ENCODE measurements at regions of chr6 and their contacts with region 1.

Region 1: DNA sequence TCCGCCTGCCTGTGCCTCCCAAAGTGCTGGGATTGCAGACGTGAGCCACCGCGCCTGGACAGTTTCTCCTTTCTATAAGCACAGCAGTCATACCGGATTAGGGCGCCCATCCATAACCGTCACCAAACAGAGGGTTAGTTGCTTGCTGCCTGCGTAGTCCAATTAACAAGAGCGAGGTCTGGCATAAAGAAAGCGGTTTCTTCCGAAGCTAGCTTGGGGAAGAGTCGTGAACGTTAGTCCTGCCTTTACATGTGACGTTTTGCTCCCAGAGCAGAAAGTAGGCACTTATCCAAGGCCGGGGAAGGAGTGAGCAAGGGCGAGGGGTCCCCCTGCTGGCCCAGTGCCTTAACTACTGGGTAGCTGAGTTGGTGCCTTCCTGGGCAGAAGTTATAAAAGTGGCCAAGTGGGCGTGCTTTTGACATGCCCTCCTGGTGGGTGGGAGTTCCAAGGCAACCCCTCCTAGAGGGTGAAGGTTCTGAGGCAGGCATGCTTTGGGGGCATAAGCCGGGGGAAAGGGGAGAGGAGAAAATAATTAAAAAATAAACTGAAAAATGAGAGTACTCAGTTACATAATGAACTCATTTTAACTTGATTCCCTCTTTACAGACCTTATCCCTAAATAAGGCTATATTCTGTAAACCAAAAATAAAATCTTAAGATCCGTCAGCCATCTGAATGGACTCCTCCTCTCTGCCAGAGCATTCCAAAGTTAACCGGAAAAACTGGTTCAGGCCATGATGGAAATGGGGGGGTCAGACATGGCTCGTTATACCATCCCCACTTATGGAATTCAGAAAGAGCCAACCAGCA is 88.0 kb downstream of the FAM217A start:
- DNase-seq: peak; percentile 52
- ATAC-seq: peak; percentile 95
- H3K4me3 ChIP-seq: peak overlapping the region; percentile 20 to 48; a peak in 3 of 4 replicates
- H3K27ac ChIP-seq: peak overlapping the region; percentile 49
- H3K4me1 ChIP-seq: no peaks in the 10 kb centered on the region
- H3K27me3 ChIP-seq: no peaks in the 10 kb centered on the region
- CTCF ChIP-seq: peak; percentile 95

Region 2: DNA sequence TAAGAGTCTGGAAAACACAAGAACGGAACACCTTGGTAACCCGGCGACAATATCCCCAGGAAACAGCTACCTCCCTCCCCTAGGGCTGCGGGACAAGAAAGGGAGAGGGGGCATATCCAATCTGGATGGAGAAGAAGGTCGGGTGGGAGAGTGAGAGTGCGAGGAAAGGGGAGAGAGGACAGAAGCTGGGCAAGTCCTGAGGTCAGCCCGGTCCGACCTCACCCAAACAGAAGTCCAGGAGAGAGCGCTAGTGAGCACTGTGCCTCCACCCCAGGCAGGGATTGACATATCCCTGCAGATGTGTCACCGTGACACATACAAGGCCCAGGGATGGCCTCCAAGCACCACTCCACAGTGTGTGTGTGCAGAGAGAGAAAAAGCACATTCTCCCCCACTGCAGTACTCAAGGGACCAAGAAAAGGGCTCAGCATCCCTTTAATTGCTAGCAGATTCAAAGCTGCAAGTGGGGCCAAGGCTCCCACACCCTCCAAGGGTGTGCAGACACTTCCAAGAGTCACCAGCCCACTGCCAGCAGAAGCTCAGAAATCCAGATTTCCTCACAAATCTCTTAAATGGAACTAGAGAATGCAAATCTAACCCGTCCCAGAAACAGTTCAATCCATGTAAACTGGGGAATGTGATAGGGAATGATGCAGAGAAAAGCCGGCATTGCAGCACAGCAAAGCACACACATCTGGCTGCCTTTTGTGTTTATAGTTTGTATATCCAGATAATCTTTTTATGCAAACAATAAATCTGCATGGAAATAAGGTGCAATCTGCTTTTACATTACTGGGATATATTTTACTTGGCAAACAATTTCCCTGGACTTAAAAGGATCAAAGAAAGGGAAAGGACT is 242.5 kb before region 1 on chr6:
- CTCF ChIA-PET with region 1: interaction called, 12 read pairs
- POLR2A ChIA-PET with region 1: no interaction called
- in situ Hi-C with region 1: no loop called
- intact Hi-C with region 1: loop called (anchors 2 kb)
- DNase-seq: peak; percentile 79
- ATAC-seq: peak; percentile 55
- H3K4me3 ChIP-seq: peak overlapping the region; percentile 62 to 66
- H3K27ac ChIP-seq: peak overlapping the region; percentile 75
- H3K4me1 ChIP-seq: peaks cover 54% of the 10 kb centered on the region
- H3K27me3 ChIP-seq: no peaks in the 10 kb centered on the region
- CTCF ChIP-seq: peak; percentile 92

Region 3: GRCh38 chr6:3929281-3929798 is 61.6 kb before region 1 on chr6:
- CTCF ChIA-PET with region 1: interaction called, 11 read pairs
- POLR2A ChIA-PET with region 1: no interaction called
- in situ Hi-C with region 1: no loop called
- intact Hi-C with region 1: no loop called
- DNase-seq: no peak
- ATAC-seq: no peak
- H3K4me3 ChIP-seq: no peak overlapping the region
- H3K27ac ChIP-seq: no peak overlapping the region
- H3K4me1 ChIP-seq: 0 out of 2 replicates have a peak, but pooled peaks cover 3% of the 10 kb centered on the region
- H3K27me3 ChIP-seq: no peaks in the 10 kb centered on the region
- CTCF ChIP-seq: no peak

Region 4: GRCh38 chr6:3943331-3943765 is 47.5 kb before region 1 on chr6:
- CTCF ChIA-PET with region 1: interaction called, 10 read pairs
- POLR2A ChIA-PET with region 1: no interaction called
- in situ Hi-C with region 1: no loop called
- intact Hi-C with region 1: no loop called
- DNase-seq: no peak
- ATAC-seq: no peak
- H3K4me3 ChIP-seq: no peak overlapping the region
- H3K27ac ChIP-seq: no peak overlapping the region
- H3K4me1 ChIP-seq: no peaks in the 10 kb centered on the region
- H3K27me3 ChIP-seq: 0 out of 2 replicates have a peak, but pooled peaks cover 3% of the 10 kb centered on the region
- CTCF ChIP-seq: no peak

Region 5: DNA sequence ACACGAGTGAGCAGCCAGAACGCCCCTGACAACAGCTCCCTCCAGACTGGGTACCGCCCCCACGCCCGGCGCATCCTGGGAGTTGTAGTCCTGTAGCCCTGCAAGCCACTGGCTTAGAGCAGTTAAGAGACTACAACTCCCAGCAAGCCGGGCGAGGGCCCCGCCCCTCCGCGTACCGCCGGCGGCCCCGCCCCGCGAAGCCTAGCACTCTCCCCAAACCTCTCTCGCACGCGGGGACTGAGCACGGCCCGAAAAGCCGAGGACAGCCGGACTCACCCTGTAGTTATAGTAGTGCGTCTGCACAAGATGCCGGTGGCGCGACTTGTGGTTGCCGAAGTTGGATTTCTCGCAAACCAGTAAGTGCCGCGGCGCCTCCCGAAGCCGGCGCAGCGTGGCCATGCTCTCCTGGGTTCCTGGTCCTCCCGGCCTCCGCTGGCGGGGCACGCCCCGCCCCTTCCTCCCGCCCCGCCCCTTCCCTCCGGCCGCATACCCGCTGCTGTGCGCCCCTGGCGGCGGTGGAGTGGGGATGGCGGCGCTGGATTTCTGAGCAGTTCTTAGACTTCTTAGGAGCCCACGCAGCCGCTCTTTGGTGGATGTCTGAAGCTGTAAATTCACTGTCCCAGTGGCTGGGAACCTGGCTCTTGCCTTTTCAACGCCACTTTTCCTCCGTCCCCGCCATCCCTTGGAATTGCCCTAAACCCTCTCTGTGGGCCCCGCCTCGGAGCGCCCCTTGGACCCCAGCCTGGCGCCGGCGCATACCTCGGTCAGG is 1012.9 kb after region 1 on chr6 and contains the start of gene RPP40:
- CTCF ChIA-PET with region 1: interaction called, 15 read pairs
- POLR2A ChIA-PET with region 1: no interaction called
- in situ Hi-C with region 1: no loop called
- intact Hi-C with region 1: no loop called
- DNase-seq: peak; percentile 73
- ATAC-seq: peak; percentile 99
- H3K4me3 ChIP-seq: peak within 1 kb of the TSS; percentile 58 to 93
- H3K27ac ChIP-seq: peak within 1 kb of the TSS; percentile 86
- H3K4me1 ChIP-seq: no peaks in the 10 kb centered on the region
- H3K27me3 ChIP-seq: no peaks in the 10 kb centered on the region
- CTCF ChIP-seq: peak; percentile 96
- total RNA-seq, gene RPP40: 25.9 TPM